ENCODE measurements at regions of chr4 and their contacts with region 1.

Region 1: GRCh38 chr4:169485791-169486742 is 126.3 kb downstream of the NEK1 start:
- DNase-seq: peak in 5 of 7 donors; percentile 11 to 70 (median 30)
- H3K4me3 ChIP-seq: no peak overlapping the region
- H3K27ac ChIP-seq: no peak overlapping the region
- H3K4me1 ChIP-seq: no peaks in the 10 kb centered on the region
- H3K27me3 ChIP-seq: no peaks in the 10 kb centered on the region
- CTCF ChIP-seq: peak in 5 of 6 experiments; percentile 42 to 67 (median 51)
- POLR2A ChIP-seq: no peak

Region 2: DNA sequence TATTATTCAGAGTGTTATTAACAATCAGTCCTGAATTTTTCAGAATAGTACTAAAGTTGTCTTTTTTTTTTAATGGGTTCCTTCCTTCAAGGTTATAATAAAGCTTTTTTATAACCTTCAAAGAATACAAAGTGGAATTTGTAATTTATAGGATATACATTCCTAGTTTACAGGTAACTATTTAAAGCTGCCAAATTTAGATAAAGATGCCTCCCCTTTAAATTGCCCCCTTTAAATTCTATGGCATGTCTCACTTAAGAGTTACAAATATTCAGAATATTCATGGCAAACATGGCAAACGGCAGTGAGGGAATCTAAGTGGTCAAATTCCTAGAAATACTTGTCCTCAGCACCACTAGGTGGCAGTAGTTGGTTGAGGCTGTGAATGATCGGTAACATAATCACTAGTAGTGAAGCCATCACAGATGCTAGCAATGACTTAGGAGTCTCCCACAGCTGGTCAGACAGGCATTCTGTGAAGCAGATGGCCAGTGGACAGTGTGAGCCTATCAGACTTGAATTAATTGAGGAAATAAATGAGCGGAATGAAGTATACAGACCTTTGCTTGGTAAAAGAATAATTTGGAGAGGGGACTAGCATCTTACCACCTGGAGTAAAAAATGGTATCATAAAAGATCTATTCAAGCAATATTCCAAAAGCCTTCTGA is 562.4 kb before region 1 on chr4:
- intact Hi-C with region 1: loop called (anchors 5 to 10 kb)
- DNase-seq: peak; percentile 51 to 77 (median 68)
- H3K4me3 ChIP-seq: no peak overlapping the region
- H3K27ac ChIP-seq: no peak overlapping the region
- H3K4me1 ChIP-seq: no peaks in the 10 kb centered on the region
- H3K27me3 ChIP-seq: no peaks in the 10 kb centered on the region
- CTCF ChIP-seq: peak; percentile 61 to 82 (median 78)
- POLR2A ChIP-seq: no peak

Region 3: GRCh38 chr4:169024762-169025161 is 461.3 kb before region 1 on chr4:
- intact Hi-C with region 1: loop called (anchors 5 to 10 kb)
- DNase-seq: peak in 1 of 7 donors; percentile 12
- H3K4me3 ChIP-seq: no peak overlapping the region
- H3K27ac ChIP-seq: no peak overlapping the region
- H3K4me1 ChIP-seq: no peaks in the 10 kb centered on the region
- H3K27me3 ChIP-seq: no peaks in the 10 kb centered on the region
- CTCF ChIP-seq: peak; percentile 30 to 70 (median 64)
- POLR2A ChIP-seq: no peak

Measured in adrenal gland (tissue), 19 donors.